Left ventricle myocardium inferior (tissue), 1 donor: ENCODE measurements at regions of chr1 and their contacts with region 1.

Region 1: DNA sequence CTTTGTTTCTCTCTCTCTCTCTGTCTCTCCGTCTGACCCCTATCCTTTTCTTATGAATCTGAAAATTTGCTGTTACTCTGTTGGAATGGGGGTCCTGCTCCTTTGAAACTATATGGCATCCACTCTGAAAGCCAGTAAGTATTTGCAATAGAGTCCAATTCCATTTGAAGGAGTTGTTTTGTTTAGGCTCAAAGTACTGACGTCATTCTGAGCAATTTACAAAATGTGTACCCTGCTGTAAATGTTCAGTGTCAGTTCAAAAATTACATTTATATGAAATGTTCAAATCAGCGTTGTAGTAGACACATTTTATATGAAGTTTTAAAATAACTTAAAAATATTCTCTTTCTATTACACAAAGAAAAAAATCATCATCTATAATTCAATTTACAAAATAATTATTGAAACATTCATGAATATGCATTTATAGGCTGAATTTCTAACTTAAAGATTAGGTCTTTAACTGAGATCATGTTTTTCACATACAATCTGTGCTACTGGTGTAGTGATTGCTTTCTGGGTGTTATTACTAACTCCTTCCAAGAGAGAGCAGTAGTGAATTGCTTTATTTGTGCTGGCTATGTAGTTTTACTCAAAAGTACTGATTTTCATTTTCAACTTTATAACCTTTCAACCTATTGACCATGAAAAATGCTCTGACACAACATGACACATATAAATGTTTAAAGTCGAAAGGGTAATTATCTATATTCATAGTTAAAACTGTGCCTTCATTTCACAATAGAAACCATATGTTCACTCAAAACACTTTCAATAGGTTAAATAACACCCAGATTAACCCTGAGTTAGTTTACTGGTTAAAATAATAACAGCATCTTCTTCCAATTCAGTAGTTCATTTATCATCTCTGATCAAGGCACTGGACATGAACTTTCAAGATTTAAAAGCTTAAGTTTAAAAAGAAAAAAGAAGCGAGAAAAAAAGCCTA is 253.1 kb upstream of the ADGRL4 start:
- DNase-seq: no peak
- H3K4me3 ChIP-seq: no peak overlapping the region
- H3K27ac ChIP-seq: no peak overlapping the region
- H3K4me1 ChIP-seq: no peaks in the 10 kb centered on the region
- H3K27me3 ChIP-seq: no peaks in the 10 kb centered on the region
- CTCF ChIP-seq: peak; percentile 70

Region 2: DNA sequence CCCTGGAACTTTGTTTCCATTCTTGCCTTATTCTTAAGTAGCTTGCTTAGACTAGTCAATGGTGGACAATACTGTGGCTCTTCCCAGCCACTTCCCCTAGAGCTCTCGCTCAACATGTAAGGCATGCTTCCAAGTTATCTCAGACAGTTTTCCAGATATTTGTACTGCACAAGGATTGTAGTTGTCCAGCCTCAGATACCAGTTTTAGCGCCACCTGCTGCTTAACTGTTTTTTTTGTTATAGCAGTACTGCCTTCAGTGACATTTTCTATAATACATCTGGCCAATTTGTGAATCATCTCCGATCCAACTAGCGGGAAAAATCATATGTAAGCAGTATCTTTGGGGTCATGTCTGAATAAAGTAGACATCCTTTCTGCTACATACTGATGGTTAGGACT is 93.6 kb after region 1 on chr1:
- intact Hi-C with region 1: loop called (anchors 10 kb)
- DNase-seq: no peak
- H3K4me3 ChIP-seq: no peak overlapping the region
- H3K27ac ChIP-seq: no peak overlapping the region
- H3K4me1 ChIP-seq: no peaks in the 10 kb centered on the region
- H3K27me3 ChIP-seq: no peaks in the 10 kb centered on the region
- CTCF ChIP-seq: peak; percentile 56